ENCODE measurements at regions of chr18 and their contacts with region 1.

Region 1: DNA sequence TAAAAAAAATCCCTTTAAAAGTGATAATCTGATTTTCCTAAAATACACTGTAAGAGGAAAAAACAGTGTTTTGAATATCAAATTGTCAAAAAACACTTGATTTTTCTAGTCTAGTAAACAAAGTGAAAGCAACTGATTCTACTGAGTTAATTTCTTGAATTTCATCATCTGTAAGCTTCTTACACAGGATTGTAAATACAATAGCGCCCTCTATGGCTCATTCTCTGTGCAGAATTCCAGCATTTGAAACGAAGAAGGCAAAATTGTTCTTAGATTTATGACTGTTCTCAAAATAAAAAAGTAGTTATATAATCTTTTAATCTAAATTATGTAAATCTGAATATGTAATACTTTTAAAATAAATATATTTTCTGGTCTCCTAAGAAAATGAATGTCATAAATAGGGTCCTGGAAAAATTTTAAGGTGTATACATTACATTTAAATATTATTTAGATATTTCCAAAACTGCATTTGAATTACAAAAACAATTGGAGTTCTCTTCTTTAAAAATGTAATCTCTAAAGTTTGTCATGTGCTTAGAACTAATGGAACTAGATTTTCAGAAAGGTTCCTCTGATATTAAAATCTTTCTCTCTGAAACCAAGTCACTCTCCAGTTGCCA is 176.9 kb upstream of the MC4R start:
- DNase-seq: peak in 1 of 9 donors; percentile 13
- ATAC-seq: no peak
- H3K4me3 ChIP-seq: no peak overlapping the region
- H3K4me3 Mint-ChIP-seq: no peak overlapping the region
- H3K27ac ChIP-seq: no peak overlapping the region
- H3K27ac Mint-ChIP-seq: no peak overlapping the region
- H3K4me1 ChIP-seq: no peaks in the 10 kb centered on the region
- H3K4me1 Mint-ChIP-seq: no peaks in the 10 kb centered on the region
- H3K27me3 ChIP-seq: no peaks in the 10 kb centered on the region
- H3K27me3 Mint-ChIP-seq: no peaks in the 10 kb centered on the region

Region 2: GRCh38 chr18:59459369-59460079 is 1089.9 kb before region 1 on chr18:
- CTCF ChIA-PET with region 1: no interaction called
- POLR2A ChIA-PET with region 1: no interaction called
- intact Hi-C with region 1: loop called in 1 of 2 experiments (anchors 5 kb)
- DNase-seq: no peak
- ATAC-seq: no peak
- H3K4me3 ChIP-seq: no peak overlapping the region
- H3K4me3 Mint-ChIP-seq: no peak overlapping the region
- H3K27ac ChIP-seq: no peak overlapping the region
- H3K27ac Mint-ChIP-seq: no peak overlapping the region
- H3K4me1 ChIP-seq: no peaks in the 10 kb centered on the region
- H3K4me1 Mint-ChIP-seq: no peaks in the 10 kb centered on the region
- H3K27me3 ChIP-seq: no peaks in the 10 kb centered on the region
- H3K27me3 Mint-ChIP-seq: peaks cover 2 to 20% (median 5%) of the 10 kb centered on the region in 5 donors

Region 3: DNA sequence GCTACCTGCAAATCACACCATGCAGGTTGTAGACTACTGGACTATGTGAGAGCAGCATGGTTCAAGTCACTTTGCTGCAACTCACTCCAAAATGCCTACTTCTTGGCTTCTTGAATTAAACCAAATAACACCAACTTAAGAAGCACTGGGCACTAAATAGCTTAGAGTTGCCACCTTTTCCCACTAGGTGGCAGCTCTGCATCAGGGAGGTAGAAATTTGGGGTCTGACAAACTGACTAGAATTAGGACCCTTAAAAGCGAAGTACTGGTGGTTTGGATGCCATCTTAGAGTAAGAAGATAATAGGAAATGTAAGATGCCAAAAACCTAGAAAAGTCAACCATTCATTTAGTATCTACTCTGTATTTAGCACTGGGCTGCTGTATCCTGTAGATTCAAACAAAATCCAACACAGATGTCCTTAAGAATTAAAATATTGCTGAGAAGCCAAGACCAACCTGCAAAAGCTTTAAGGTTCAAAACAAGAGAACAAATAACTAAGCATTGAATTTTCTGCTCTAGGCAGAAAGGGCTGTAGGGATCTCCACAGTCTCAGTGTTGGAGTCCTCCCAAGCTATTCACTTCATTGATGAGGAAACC is 917.8 kb before region 1 on chr18:
- CTCF ChIA-PET with region 1: no interaction called
- POLR2A ChIA-PET with region 1: no interaction called
- intact Hi-C with region 1: loop called in 1 of 2 experiments (anchors 5 kb)
- DNase-seq: no peak
- ATAC-seq: no peak
- H3K4me3 ChIP-seq: no peak overlapping the region
- H3K4me3 Mint-ChIP-seq: no peak overlapping the region
- H3K27ac ChIP-seq: no peak overlapping the region
- H3K27ac Mint-ChIP-seq: no peak overlapping the region
- H3K4me1 ChIP-seq: no peaks in the 10 kb centered on the region
- H3K4me1 Mint-ChIP-seq: no peaks in the 10 kb centered on the region
- H3K27me3 ChIP-seq: no peaks in the 10 kb centered on the region
- H3K27me3 Mint-ChIP-seq: peaks cover 0 to 20% (median 17%) of the 10 kb centered on the region in 5 donors

Region 4: DNA sequence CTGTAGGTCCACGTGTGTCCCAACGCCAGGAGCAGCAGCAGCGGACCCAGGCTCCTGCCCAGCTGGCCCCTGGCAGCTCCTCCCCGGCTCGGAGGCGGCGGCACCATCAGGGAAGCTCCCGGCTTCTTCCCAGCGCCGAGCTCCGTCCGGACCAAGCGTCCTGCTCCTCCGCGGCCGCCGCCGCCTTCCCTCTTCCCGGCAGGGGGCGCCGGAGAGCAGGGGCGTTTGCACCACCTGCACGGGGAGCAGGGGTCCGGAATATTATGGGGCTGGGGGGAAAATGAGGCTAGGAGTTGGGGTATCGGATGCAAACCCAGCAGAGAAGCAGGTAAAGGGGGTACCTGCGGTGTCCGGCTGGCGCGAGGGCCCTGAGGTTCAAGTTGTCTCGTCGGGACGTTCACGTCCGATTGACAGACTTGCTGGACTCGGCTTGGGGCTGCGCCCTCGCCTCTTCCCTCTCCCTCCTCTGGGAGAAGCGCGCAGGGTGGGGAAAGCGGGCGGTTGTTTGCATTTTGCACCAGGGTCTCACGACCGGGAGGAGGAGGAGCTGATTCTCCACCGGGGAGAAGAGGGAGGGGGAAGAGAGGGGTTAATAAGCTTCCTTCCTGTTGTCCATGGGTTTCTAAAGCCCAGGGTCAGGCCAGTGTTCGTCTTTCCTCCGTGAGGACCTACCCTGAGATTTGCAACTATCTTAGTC is 852.1 kb before region 1 on chr18 and contains the start of gene CCBE1:
- CTCF ChIA-PET with region 1: no interaction called
- POLR2A ChIA-PET with region 1: no interaction called
- intact Hi-C with region 1: loop called in 1 of 2 experiments (anchors 5 kb)
- DNase-seq: peak in 1 of 9 donors; percentile 70
- ATAC-seq: no peak
- H3K4me3 ChIP-seq: no peak within 1 kb of the TSS
- H3K4me3 Mint-ChIP-seq: peak within 1 kb of the TSS in 8 of 10 donors; percentile 13 to 62 (median 36)
- H3K27ac ChIP-seq: no peak within 1 kb of the TSS
- H3K27ac Mint-ChIP-seq: no peak within 1 kb of the TSS
- H3K4me1 ChIP-seq: no peaks in the 10 kb centered on the region
- H3K4me1 Mint-ChIP-seq: peaks cover 0 to 12% (median 6%) of the 10 kb centered on the region in 7 donors
- H3K27me3 ChIP-seq: peaks cover 0 to 8% of the 10 kb centered on the region in 2 donors
- H3K27me3 Mint-ChIP-seq: peaks cover 43 to 66% (median 49%) of the 10 kb centered on the region in 5 donors
- total RNA-seq, gene CCBE1: not detected

Region 5: DNA sequence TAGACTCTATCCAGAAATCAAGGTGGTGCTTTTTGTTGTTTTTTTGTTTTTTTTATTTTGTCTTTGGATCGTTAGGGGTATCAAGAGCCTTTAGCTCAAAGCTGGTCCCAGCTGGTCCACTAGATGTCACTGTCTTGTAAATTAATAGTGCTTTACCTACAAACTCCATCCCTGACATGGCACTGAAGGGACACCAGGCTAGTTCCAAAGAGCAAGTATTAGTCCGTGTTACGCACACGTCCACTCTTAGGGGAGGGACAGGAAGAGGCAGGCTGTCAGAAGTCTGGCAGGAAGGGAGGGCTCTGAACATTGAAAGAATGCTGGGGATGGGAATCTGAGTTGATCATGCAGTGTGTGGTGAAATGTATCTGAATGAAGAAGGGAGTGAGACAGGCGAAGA is 766.3 kb before region 1 on chr18:
- CTCF ChIA-PET with region 1: no interaction called
- POLR2A ChIA-PET with region 1: no interaction called
- intact Hi-C with region 1: loop called in 1 of 2 experiments (anchors 5 kb)
- DNase-seq: no peak
- ATAC-seq: no peak
- H3K4me3 ChIP-seq: no peak overlapping the region
- H3K4me3 Mint-ChIP-seq: no peak overlapping the region
- H3K27ac ChIP-seq: no peak overlapping the region
- H3K27ac Mint-ChIP-seq: no peak overlapping the region
- H3K4me1 ChIP-seq: no peaks in the 10 kb centered on the region
- H3K4me1 Mint-ChIP-seq: no peaks in the 10 kb centered on the region
- H3K27me3 ChIP-seq: no peaks in the 10 kb centered on the region
- H3K27me3 Mint-ChIP-seq: peaks cover 0 to 10% (median 9%) of the 10 kb centered on the region in 5 donors

Region 6: DNA sequence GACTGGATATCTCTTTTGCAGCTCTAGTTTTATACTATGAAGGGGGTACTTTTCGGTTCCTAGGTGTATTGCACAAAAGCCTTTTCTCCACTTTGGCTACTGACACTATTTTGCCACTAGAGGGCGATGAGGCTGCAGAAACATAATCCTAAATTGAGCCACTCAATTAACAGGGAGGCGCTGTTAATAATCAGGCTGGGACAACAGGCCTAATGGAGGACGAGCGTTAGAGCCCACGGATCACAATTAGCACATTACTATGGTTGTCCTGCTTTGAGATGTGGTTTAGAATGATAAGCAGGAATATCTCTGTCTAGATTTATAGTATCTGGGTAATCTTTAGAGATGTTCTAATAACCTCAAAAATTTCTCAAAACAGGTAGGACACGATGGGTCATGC is 711.9 kb before region 1 on chr18:
- CTCF ChIA-PET with region 1: no interaction called
- POLR2A ChIA-PET with region 1: no interaction called
- intact Hi-C with region 1: loop called in 1 of 2 experiments (anchors 1 kb)
- DNase-seq: peak in 8 of 9 donors; percentile 10 to 43 (median 26)
- ATAC-seq: peak; percentile 75
- H3K4me3 ChIP-seq: no peak overlapping the region
- H3K4me3 Mint-ChIP-seq: no peak overlapping the region
- H3K27ac ChIP-seq: no peak overlapping the region
- H3K27ac Mint-ChIP-seq: no peak overlapping the region
- H3K4me1 ChIP-seq: no peaks in the 10 kb centered on the region
- H3K4me1 Mint-ChIP-seq: peaks cover 0 to 7% (median 0%) of the 10 kb centered on the region in 7 donors
- H3K27me3 ChIP-seq: no peaks in the 10 kb centered on the region
- H3K27me3 Mint-ChIP-seq: peaks cover 0 to 25% (median 0%) of the 10 kb centered on the region in 5 donors

Region 7: GRCh38 chr18:59988098-59988706 is 561.2 kb before region 1 on chr18:
- CTCF ChIA-PET with region 1: no interaction called
- POLR2A ChIA-PET with region 1: no interaction called
- intact Hi-C with region 1: loop called (anchors 1 kb)
- DNase-seq: peak in 5 of 9 donors; percentile 19 to 37 (median 24)
- ATAC-seq: peak; percentile 54
- H3K4me3 ChIP-seq: no peak overlapping the region
- H3K4me3 Mint-ChIP-seq: no peak overlapping the region
- H3K27ac ChIP-seq: no peak overlapping the region
- H3K27ac Mint-ChIP-seq: no peak overlapping the region
- H3K4me1 ChIP-seq: no peaks in the 10 kb centered on the region
- H3K4me1 Mint-ChIP-seq: peaks cover 0 to 2% (median 0%) of the 10 kb centered on the region in 7 donors
- H3K27me3 ChIP-seq: no peaks in the 10 kb centered on the region
- H3K27me3 Mint-ChIP-seq: peaks cover 24 to 28% (median 27%) of the 10 kb centered on the region in 5 donors

Region 8: GRCh38 chr18:60485201-60485600 is 64.2 kb before region 1 on chr18:
- CTCF ChIA-PET with region 1: no interaction called
- POLR2A ChIA-PET with region 1: no interaction called
- intact Hi-C with region 1: no loop called
- DNase-seq: no peak
- ATAC-seq: no peak
- H3K4me3 ChIP-seq: no peak overlapping the region
- H3K4me3 Mint-ChIP-seq: no peak overlapping the region
- H3K27ac ChIP-seq: no peak overlapping the region
- H3K27ac Mint-ChIP-seq: no peak overlapping the region
- H3K4me1 ChIP-seq: no peaks in the 10 kb centered on the region
- H3K4me1 Mint-ChIP-seq: no peaks in the 10 kb centered on the region
- H3K27me3 ChIP-seq: no peaks in the 10 kb centered on the region
- H3K27me3 Mint-ChIP-seq: no peaks in the 10 kb centered on the region

Region 9: GRCh38 chr18:60732143-60732542 is 182.7 kb after region 1 on chr18:
- CTCF ChIA-PET with region 1: no interaction called
- POLR2A ChIA-PET with region 1: no interaction called
- intact Hi-C with region 1: no loop called
- DNase-seq: no peak
- ATAC-seq: no peak
- H3K4me3 ChIP-seq: no peak overlapping the region
- H3K4me3 Mint-ChIP-seq: no peak overlapping the region
- H3K27ac ChIP-seq: no peak overlapping the region
- H3K27ac Mint-ChIP-seq: no peak overlapping the region
- H3K4me1 ChIP-seq: no peaks in the 10 kb centered on the region
- H3K4me1 Mint-ChIP-seq: no peaks in the 10 kb centered on the region
- H3K27me3 ChIP-seq: no peaks in the 10 kb centered on the region
- H3K27me3 Mint-ChIP-seq: no peaks in the 10 kb centered on the region